Activated CD8-positive, alpha-beta T cell treated with anti-CD3 and anti-CD28 coated beads for 36 hours (primary cell): ENCODE measurements at regions of chr10 and their contacts with region 1.

Region 1: GRCh38 chr10:62496925-62497324 is 122.8 kb downstream of the ZNF365 start:
- DNase-seq: no peak
- ATAC-seq: no peak
- H3K4me3 Mint-ChIP-seq: no peak overlapping the region
- H3K27ac Mint-ChIP-seq: no peak overlapping the region
- H3K4me1 Mint-ChIP-seq: no peaks in the 10 kb centered on the region
- H3K27me3 Mint-ChIP-seq: peaks cover 8% of the 10 kb centered on the region
- CTCF ChIP-seq: no peak

Region 2: DNA sequence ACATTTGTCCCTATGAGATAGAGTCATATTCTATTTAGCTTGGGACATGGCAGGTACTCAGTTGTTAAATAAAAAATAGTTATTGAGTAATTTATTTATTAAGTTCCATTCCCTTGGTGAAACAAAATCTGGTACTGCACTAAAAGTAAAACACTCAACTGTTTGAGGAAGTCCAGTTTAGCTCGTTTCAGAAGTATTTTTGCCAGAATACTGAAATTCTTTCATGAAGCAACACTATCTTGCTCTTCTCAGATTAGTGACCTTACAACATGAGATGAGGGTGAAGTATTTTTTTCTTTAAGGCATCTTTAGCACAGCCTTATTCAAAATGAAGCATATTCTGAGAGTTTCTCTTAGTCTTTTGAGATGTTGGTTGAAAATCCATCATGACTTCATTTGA is 16.7 kb before region 1 on chr10:
- CTCF ChIA-PET with region 1: interaction called, 4 read pairs
- POLR2A ChIA-PET with region 1: no interaction called
- intact Hi-C with region 1: loop called (anchors 1 kb)
- DNase-seq: no peak
- ATAC-seq: no peak
- H3K4me3 Mint-ChIP-seq: no peak overlapping the region
- H3K27ac Mint-ChIP-seq: no peak overlapping the region
- H3K4me1 Mint-ChIP-seq: no peaks in the 10 kb centered on the region
- H3K27me3 Mint-ChIP-seq: peaks cover 8% of the 10 kb centered on the region
- CTCF ChIP-seq: no peak

Region 3: DNA sequence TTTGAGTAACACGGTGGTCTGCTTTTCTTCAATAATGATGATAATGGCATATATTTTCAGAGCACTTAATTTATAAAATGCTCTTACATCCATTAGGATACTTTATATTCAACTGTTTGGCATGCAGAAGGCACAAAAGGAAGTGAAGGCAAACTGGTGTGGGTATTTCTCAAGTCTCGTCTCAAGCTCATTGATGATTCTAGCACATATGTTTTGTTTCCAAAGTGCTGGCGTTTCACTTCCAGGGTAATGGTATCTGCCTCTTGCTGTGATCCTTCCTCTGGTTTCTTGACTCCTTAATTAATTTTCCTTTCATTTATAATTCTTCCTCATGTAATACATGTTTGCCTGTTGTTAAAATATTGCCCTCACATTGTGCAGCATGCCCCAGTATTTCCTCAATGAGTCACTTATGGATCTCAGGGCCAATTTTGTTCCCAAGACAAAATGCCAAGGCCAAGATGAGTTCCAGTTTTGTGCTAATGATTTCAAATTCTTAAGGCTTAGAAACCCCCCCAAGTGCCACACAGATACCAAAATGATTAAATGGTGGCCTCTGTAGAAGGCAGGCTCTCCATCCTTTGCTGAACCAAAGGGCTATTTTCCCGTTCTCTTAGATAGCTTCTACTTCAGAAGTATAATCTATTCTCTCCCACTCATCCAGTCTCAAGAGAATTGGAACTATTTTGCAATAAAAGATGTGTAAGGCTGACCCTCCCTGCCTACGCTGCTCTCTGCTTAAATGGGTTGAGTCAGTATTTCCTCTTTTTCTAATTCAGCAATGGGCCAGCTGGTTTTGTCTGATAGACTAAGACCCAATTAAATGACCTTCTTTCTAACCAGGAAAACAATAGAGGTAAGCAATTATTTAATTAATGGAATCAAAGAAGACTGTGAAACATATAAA is 48.5 kb after region 1 on chr10:
- CTCF ChIA-PET with region 1: no interaction called
- POLR2A ChIA-PET with region 1: no interaction called
- intact Hi-C with region 1: no loop called
- DNase-seq: no peak
- ATAC-seq: no peak
- H3K4me3 Mint-ChIP-seq: no peak overlapping the region
- H3K27ac Mint-ChIP-seq: no peak overlapping the region
- H3K4me1 Mint-ChIP-seq: no peaks in the 10 kb centered on the region
- H3K27me3 Mint-ChIP-seq: no peaks in the 10 kb centered on the region
- CTCF ChIP-seq: no peak